ENCODE measurements at regions of chr2 and their contacts with region 1.

Region 1: DNA sequence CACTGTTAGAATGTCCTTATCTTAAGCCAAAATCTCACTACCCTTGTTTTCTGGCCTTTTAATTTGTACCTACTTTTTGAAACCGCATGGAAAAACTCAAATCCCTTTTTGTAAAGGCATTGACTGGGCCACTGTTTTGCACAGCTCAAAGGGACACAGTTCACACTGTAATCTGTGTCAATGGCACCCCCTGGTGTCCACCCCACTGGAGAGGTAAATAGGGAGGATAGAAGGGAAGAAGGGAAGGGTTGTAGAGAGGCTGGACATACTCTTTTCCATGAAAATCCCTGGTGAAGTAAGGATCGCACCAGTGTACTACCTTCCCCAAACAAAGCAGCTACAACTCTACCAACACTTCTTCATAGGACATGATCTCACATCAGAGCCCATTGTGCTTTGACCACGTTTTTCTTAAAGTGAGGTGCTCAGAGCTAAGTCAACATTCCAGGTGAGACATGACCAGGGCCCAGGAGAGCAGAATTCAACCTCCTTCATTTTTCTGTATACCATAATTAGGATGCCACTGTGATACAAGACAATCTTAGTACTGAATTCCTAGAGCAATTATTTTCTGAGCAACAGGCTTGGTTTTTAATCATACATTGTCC is 92.4 kb upstream of the RMDN2 start:
- DNase-seq: peak; percentile 45
- H3K4me3 ChIP-seq: no peak overlapping the region
- H3K27ac ChIP-seq: no peak overlapping the region
- H3K4me1 ChIP-seq: peaks cover 0 to 22% (median 3%) of the 10 kb centered on the region in 3 donors
- H3K27me3 ChIP-seq: peaks cover 0 to 24% (median 0%) of the 10 kb centered on the region in 4 donors
- CTCF ChIP-seq: peak; percentile 69 to 92 (median 89)
- POLR2A ChIP-seq: no peak

Region 2: GRCh38 chr2:37125416-37125815 is 707.3 kb before region 1 on chr2:
- intact Hi-C with region 1: no loop called
- DNase-seq: no peak
- H3K4me3 ChIP-seq: no peak overlapping the region
- H3K27ac ChIP-seq: no peak overlapping the region
- H3K4me1 ChIP-seq: no peaks in the 10 kb centered on the region
- H3K27me3 ChIP-seq: no peaks in the 10 kb centered on the region
- CTCF ChIP-seq: no peak
- POLR2A ChIP-seq: no peak

Region 3: DNA sequence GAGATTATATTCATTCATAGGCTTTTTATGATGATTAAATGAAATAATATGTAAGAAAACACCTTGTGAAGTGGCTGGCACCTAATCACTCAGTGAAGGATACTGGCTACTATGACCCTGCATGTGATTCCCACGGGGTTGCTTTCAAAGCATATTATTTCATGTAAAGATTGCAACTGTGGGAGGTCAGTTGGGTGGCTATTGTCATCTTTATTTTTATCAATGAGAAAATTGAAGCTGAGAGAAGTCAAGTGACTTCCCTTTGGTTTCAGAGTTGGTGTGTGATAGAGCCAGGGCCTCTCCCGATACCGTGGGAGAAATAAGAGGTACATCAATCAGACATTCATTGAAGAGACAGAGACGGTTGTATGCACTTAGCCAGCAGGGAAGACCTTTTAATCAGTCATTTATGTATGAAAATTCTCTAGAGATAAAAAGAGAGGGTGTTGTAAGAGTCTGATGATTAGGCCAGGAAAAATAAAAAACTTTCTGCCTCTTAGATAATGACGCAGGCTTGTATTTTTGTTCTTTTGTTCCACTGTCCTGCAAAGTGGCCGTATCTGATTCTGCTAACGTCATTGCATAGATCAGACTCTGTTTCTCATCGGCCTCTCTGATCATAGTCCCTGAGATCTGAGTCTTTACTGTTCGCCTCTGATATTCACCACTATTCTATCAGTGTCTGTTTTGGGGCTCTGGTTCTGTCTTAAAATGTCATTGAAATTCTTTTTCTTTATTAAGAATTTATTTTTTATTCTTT is 437.7 kb before region 1 on chr2:
- intact Hi-C with region 1: loop called (anchors 5 kb)
- DNase-seq: no peak
- H3K4me3 ChIP-seq: no peak overlapping the region
- H3K27ac ChIP-seq: no peak overlapping the region
- H3K4me1 ChIP-seq: peaks cover 7 to 11% (median 10%) of the 10 kb centered on the region in 3 donors
- H3K27me3 ChIP-seq: no peaks in the 10 kb centered on the region
- CTCF ChIP-seq: no peak
- POLR2A ChIP-seq: no peak

Region 4: GRCh38 chr2:37414470-37414949 is 418.2 kb before region 1 on chr2:
- intact Hi-C with region 1: loop called (anchors 5 kb)
- DNase-seq: no peak
- H3K4me3 ChIP-seq: no peak overlapping the region
- H3K27ac ChIP-seq: no peak overlapping the region
- H3K4me1 ChIP-seq: peaks cover 0 to 13% (median 8%) of the 10 kb centered on the region in 3 donors
- H3K27me3 ChIP-seq: peaks cover 0 to 51% (median 0%) of the 10 kb centered on the region in 4 donors
- CTCF ChIP-seq: peak; percentile 67 to 94 (median 84)
- POLR2A ChIP-seq: no peak

Measured in esophagus squamous epithelium (tissue), 5 donors.